K562 (cell line): ENCODE measurements at regions of chr15 and their contacts with region 1.

Region 1: GRCh38 chr15:84588053-84588874 is 12.5 kb upstream of the ZSCAN2 start:
- DNase-seq: peak; percentile 90 to 95 (median 94)
- ATAC-seq: peak; percentile 100
- H3K4me3 ChIP-seq: no peak overlapping the region
- H3K27ac ChIP-seq: no peak overlapping the region
- H3K4me1 ChIP-seq: peaks cover 0 to 7% of the 10 kb centered on the region in 2 experiments; a peak in 2 of 5 replicates
- H3K27me3 ChIP-seq: no peaks in the 10 kb centered on the region
- CTCF ChIP-seq: peak; percentile 47 to 82 (median 78); a peak in 5 of 6 replicates
- EP300 ChIP-seq: no peak
- POLR2A ChIP-seq: no peak
- RAD21 ChIP-seq: peak; percentile 71 to 79

Region 2: GRCh38 chr15:84552896-84553295 is 35.4 kb before region 1 on chr15:
- CTCF ChIA-PET with region 1: no interaction called
- POLR2A ChIA-PET with region 1: no interaction called
- in situ Hi-C with region 1: no loop called
- intact Hi-C with region 1: no loop called
- DNase-seq: no peak
- ATAC-seq: no peak
- H3K4me3 ChIP-seq: no peak overlapping the region
- H3K27ac ChIP-seq: no peak overlapping the region
- H3K4me1 ChIP-seq: peaks cover 0 to 4% of the 10 kb centered on the region in 2 experiments; a peak in 3 of 5 replicates
- H3K27me3 ChIP-seq: no peaks in the 10 kb centered on the region
- CTCF ChIP-seq: no peak
- EP300 ChIP-seq: no peak
- POLR2A ChIP-seq: no peak
- RAD21 ChIP-seq: no peak

Region 3: DNA sequence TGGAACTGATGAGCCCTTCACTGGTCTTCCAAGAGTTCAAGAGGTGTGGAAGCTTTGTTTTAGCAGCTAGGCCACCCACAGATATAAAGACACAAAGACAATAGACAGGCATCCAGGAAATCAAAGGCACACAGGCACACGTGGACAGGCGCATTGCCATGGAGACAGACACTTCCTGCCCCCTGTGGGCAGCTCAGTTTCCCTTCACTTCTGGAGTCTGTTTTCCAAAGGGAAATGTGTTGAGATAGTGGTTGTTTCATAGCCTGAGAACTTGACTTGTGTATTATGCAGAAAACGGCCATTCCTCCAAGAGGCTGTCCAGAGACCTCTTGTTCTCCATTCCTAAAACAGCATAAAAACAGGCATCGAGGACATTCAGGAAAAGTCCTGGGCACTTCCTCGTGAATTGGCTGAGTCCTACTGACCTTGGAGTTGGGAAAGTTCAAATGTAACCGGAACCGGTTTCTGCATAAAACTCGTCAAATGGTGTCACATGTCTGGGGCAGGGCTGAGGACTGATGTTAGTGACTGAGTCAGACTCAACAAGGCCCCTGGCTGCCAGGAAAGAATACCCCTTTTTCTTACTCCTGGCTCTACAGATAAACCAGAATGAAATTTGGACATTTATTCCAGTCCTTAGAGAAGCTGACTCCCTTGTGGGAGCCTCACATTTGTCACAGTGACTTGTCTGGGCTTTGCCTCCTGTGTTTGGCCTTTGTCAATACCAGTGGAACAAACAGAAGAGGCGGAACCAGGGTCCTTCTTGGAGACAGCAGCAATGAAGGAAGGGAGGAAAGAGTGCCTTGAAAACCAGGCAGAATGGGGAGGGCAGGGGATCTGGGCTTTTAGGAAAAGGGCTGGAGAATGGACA is 230.2 kb after region 1 on chr15:
- CTCF ChIA-PET with region 1: interaction called, 5 read pairs
- POLR2A ChIA-PET with region 1: no interaction called
- in situ Hi-C with region 1: no loop called
- intact Hi-C with region 1: loop called (anchors 2 kb)
- DNase-seq: peak in 2 of 4 experiments; percentile 33 to 46
- ATAC-seq: no peak
- H3K4me3 ChIP-seq: no peak overlapping the region
- H3K27ac ChIP-seq: peak overlapping the region; percentile 37; the same call in 2 of the 3 replicates
- H3K4me1 ChIP-seq: peaks cover 24 to 33% of the 10 kb centered on the region in 2 experiments
- H3K27me3 ChIP-seq: no peaks in the 10 kb centered on the region
- CTCF ChIP-seq: peak in 1 of 3 experiments; percentile 12; a peak in 1 of 6 replicates
- EP300 ChIP-seq: no peak
- POLR2A ChIP-seq: no peak
- RAD21 ChIP-seq: no peak

Region 4: GRCh38 chr15:84833447-84834228 is 245.4 kb after region 1 on chr15:
- CTCF ChIA-PET with region 1: no interaction called
- POLR2A ChIA-PET with region 1: no interaction called
- in situ Hi-C with region 1: no loop called
- intact Hi-C with region 1: no loop called
- DNase-seq: peak in 2 of 4 experiments; percentile 52 to 67
- ATAC-seq: peak; percentile 77
- H3K4me3 ChIP-seq: no peak overlapping the region
- H3K27ac ChIP-seq: no peak overlapping the region
- H3K4me1 ChIP-seq: peaks cover 7 to 19% of the 10 kb centered on the region in 2 experiments; a peak in 3 of 5 replicates
- H3K27me3 ChIP-seq: peaks cover 0 to 4% of the 10 kb centered on the region in 2 experiments; a peak in 2 of 5 replicates
- CTCF ChIP-seq: no peak
- EP300 ChIP-seq: no peak
- POLR2A ChIP-seq: no peak
- RAD21 ChIP-seq: no peak

Region 5: GRCh38 chr15:84871428-84872305 is 283.4 kb after region 1 on chr15:
- CTCF ChIA-PET with region 1: interaction called, 3 read pairs
- POLR2A ChIA-PET with region 1: no interaction called
- in situ Hi-C with region 1: loop called (anchors 25 kb)
- intact Hi-C with region 1: loop called (anchors 2 kb)
- DNase-seq: peak in 3 of 4 experiments; percentile 35 to 48 (median 43)
- ATAC-seq: peak; percentile 80
- H3K4me3 ChIP-seq: no peak overlapping the region
- H3K27ac ChIP-seq: no peak overlapping the region
- H3K4me1 ChIP-seq: no peaks in the 10 kb centered on the region; a peak in 1 of 5 replicates
- H3K27me3 ChIP-seq: peaks cover 20 to 52% of the 10 kb centered on the region in 2 experiments
- CTCF ChIP-seq: peak; percentile 67 to 70 (median 70)
- EP300 ChIP-seq: no peak
- POLR2A ChIP-seq: no peak
- RAD21 ChIP-seq: peak; percentile 34 to 65

Region 6: GRCh38 chr15:84883916-84884768 is 295.9 kb after region 1 on chr15 and contains the start of gene SLC28A1:
- CTCF ChIA-PET with region 1: no interaction called
- POLR2A ChIA-PET with region 1: no interaction called
- in situ Hi-C with region 1: loop called (anchors 25 kb)
- intact Hi-C with region 1: loop called (anchors 2 kb)
- DNase-seq: no peak
- ATAC-seq: peak; percentile 34
- H3K4me3 ChIP-seq: no peak within 1 kb of the TSS
- H3K27ac ChIP-seq: no peak within 1 kb of the TSS
- H3K4me1 ChIP-seq: peaks cover 3 to 10% of the 10 kb centered on the region in 2 experiments; a peak in 2 of 5 replicates
- H3K27me3 ChIP-seq: peaks cover 0 to 18% of the 10 kb centered on the region in 2 experiments; a peak in 3 of 5 replicates
- CTCF ChIP-seq: no peak
- EP300 ChIP-seq: no peak
- POLR2A ChIP-seq: no peak
- RAD21 ChIP-seq: no peak
- polyA plus RNA-seq, gene SLC28A1: 0.04 TPM in 1 of 2 experiments, not detected in the other